Activated CD4-positive, alpha-beta memory T cell treated with anti-CD3 and anti-CD28 coated beads for 36 hours (primary cell): ENCODE measurements at regions of chr5 and their contacts with region 1.

Region 1: GRCh38 chr5:159965031-159965837 is 43.7 kb upstream of the TTC1 start:
- DNase-seq: peak; percentile 50
- H3K4me3 Mint-ChIP-seq: no peak overlapping the region
- H3K27ac Mint-ChIP-seq: no peak overlapping the region
- H3K4me1 Mint-ChIP-seq: no peaks in the 10 kb centered on the region
- H3K27me3 Mint-ChIP-seq: peaks cover 34% of the 10 kb centered on the region

Region 2: GRCh38 chr5:159444441-159445082 is 520.7 kb before region 1 on chr5:
- CTCF ChIA-PET with region 1: interaction called, 4 read pairs
- POLR2A ChIA-PET with region 1: no interaction called
- intact Hi-C with region 1: loop called (anchors 1 kb)
- DNase-seq: no peak
- H3K4me3 Mint-ChIP-seq: no peak overlapping the region
- H3K27ac Mint-ChIP-seq: no peak overlapping the region
- H3K4me1 Mint-ChIP-seq: no peaks in the 10 kb centered on the region
- H3K27me3 Mint-ChIP-seq: peaks cover 6% of the 10 kb centered on the region